ENCODE measurements at regions of chr1 and their contacts with region 1.

Region 1: DNA sequence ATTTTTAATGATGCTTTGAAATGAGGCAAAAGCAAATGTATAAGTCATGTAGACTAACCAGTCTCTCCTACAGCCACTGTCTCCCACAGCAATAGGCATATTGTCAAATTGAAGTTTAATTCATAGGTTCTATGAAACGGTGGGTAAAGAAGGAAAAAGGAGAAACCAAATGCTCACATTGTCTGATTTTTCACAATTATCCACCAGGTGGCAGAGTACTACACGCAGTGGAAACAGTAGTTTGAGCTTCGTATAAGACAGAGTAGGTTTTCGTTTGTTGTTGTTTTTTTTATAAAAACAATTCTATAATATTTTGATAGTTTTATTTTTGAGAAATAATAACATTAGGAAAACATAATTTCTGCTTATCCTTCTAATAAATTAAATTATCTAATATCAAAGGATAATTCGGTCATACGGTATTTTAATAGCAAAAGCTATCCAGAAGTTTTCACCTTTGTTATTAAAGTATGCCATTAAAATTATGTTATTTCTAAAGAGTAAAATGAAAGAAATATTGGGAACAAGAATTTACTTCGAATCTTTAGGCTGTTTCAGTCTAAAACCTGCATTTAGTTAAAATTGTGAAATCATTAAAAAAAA is 39.1 kb downstream of the TYW3 start:
- DNase-seq: no peak
- ATAC-seq: no peak
- H3K4me3 ChIP-seq: no peak overlapping the region
- H3K27ac ChIP-seq: no peak overlapping the region
- H3K4me1 ChIP-seq: no peaks in the 10 kb centered on the region
- H3K27me3 ChIP-seq: peaks cover 0 to 27% (median 0%) of the 10 kb centered on the region in 9 donors
- CTCF ChIP-seq: peak; percentile 50 to 84 (median 66)
- POLR2A ChIP-seq: no peak

Region 2: DNA sequence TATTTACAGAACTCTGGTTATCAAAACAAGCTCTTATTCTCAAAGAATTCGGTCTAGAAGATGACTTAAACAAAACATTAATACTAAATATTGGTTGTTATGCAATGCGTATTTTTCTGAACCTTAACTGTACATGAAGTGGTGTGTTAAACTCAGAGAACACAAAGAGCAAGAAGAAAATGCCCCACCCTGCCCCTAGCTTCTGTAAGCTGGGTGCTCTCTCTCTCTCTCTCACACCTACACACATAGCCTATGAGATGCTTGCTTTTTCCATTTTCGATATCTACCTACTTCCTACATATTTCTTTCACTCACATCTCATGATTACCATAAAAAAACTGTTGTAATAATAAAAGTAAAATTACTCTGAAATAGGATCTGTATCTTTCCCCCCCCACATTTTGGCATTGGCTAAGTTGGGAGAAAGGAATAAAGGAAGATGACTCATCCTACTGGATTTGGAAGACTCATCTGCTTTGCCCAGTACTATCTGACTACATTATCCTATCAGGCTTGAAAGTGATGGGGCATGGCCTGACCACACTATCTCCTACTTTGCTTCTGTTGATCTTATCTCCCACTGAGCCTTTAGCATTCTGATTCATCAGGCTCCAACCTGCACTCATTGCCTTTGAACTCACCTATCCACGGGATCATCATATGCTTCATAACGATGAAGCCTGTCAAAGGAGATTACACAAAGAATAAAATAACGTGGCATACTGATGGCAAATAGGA is 42.1 kb before region 1 on chr1:
- intact Hi-C with region 1: no loop called
- DNase-seq: no peak
- ATAC-seq: no peak
- H3K4me3 ChIP-seq: no peak overlapping the region
- H3K27ac ChIP-seq: no peak overlapping the region
- H3K4me1 ChIP-seq: peaks cover 0 to 49% (median 16%) of the 10 kb centered on the region in 12 donors
- H3K27me3 ChIP-seq: no peaks in the 10 kb centered on the region
- CTCF ChIP-seq: no peak
- POLR2A ChIP-seq: no peak

Region 3: GRCh38 chr1:74858136-74858535 is 86.1 kb after region 1 on chr1:
- intact Hi-C with region 1: no loop called
- DNase-seq: no peak
- ATAC-seq: no peak
- H3K4me3 ChIP-seq: no peak overlapping the region
- H3K27ac ChIP-seq: no peak overlapping the region
- H3K4me1 ChIP-seq: no peaks in the 10 kb centered on the region
- H3K27me3 ChIP-seq: no peaks in the 10 kb centered on the region
- CTCF ChIP-seq: no peak
- POLR2A ChIP-seq: no peak

Region 4: DNA sequence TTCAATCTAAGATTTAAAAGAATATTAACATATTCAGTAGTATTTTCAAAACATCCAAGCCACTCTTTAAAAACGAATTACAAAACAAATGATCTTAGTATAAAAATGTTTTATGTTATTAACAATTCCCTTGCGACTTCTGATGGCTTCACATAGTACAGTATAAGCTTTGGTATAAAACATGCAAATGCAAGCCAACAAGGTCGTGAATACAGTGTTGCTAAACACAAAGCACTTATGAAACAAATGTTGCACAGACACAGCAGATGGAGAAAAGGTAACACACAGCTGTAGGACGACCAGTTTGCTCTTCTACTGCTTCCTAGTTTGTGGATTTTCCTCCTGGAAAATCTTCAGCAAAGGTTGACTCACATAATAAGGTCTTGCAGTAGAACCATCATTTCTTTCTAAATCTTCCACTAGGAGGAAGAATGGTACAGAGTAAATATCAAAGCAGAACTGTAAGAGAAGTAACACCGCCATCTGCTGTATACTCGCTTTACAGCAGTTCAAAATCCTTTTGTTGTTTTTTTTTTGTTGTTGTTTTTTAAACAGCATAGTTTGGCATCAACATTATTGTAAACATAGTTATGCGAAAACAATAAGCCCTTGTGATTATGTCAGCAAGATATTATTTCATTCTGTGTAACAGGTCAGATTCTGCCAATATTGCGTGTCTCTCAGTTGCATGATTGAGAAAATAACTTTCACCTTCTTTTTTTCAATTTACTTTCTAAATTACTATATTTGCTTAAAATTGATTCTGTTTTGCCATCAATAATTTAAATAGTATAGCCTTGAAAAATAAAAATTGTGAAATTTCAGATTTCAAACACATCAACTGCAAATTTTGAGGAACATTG is 431.6 kb after region 1 on chr1:
- intact Hi-C with region 1: loop called (anchors 2 to 5 kb)
- DNase-seq: no peak
- ATAC-seq: no peak
- H3K4me3 ChIP-seq: no peak overlapping the region
- H3K27ac ChIP-seq: no peak overlapping the region
- H3K4me1 ChIP-seq: no peaks in the 10 kb centered on the region
- H3K27me3 ChIP-seq: no peaks in the 10 kb centered on the region
- CTCF ChIP-seq: peak; percentile 30 to 68 (median 56)
- POLR2A ChIP-seq: no peak

Region 5: DNA sequence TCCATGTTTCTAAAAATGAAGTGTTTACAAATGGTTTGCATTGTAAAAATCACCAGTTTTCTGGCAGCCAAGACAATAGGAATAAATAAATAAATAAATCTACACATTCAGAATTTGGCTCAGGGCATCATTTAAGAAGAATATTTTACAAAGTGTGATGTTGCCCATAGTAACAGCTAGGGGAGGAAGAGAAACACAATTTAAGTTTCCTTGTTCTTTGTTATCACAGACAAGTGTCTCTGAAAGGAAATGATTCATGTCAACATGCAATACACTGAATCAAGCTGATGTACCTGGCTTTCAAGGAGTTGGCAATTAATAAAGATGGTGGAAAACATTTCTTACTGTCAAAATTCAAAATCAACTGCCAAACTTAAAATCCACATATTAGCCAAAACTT is 436.8 kb after region 1 on chr1:
- intact Hi-C with region 1: loop called in 5 of 10 experiments (anchors 2 to 5 kb)
- DNase-seq: no peak
- ATAC-seq: no peak
- H3K4me3 ChIP-seq: no peak overlapping the region
- H3K27ac ChIP-seq: no peak overlapping the region
- H3K4me1 ChIP-seq: no peaks in the 10 kb centered on the region
- H3K27me3 ChIP-seq: no peaks in the 10 kb centered on the region
- CTCF ChIP-seq: no peak
- POLR2A ChIP-seq: no peak